ENCODE measurements at regions of chr11 and their contacts with region 1.

Region 1: GRCh38 chr11:78961247-78961646 is 386.6 kb upstream of the NARS2 start:
- DNase-seq: no peak
- ATAC-seq: peak; percentile 59 to 75
- H3K4me3 ChIP-seq: no peak overlapping the region
- H3K27ac ChIP-seq: no peak overlapping the region
- H3K4me1 ChIP-seq: no peaks in the 10 kb centered on the region
- H3K27me3 ChIP-seq: no peaks in the 10 kb centered on the region

Region 2: GRCh38 chr11:78798660-78799059 is 162.6 kb before region 1 on chr11:
- intact Hi-C with region 1: loop called in 1 of 4 experiments (anchors 10 kb)
- DNase-seq: peak; percentile 82 to 92 (median 90)
- ATAC-seq: peak; percentile 89
- H3K4me3 ChIP-seq: no peak overlapping the region
- H3K27ac ChIP-seq: no peak overlapping the region
- H3K4me1 ChIP-seq: peaks cover 18% of the 10 kb centered on the region
- H3K27me3 ChIP-seq: no peaks in the 10 kb centered on the region

Region 3: GRCh38 chr11:78840200-78840599 is 121.0 kb before region 1 on chr11:
- intact Hi-C with region 1: loop called in 1 of 4 experiments (anchors 10 kb)
- DNase-seq: no peak
- ATAC-seq: peak; percentile 75 to 87
- H3K4me3 ChIP-seq: no peak overlapping the region
- H3K27ac ChIP-seq: peak overlapping the region; percentile 56
- H3K4me1 ChIP-seq: no peaks in the 10 kb centered on the region
- H3K27me3 ChIP-seq: no peaks in the 10 kb centered on the region

Measured in right cardiac atrium (tissue), 5 donors.